Posterior vena cava (tissue), 2 donors: ENCODE measurements at regions of chr17 and their contacts with region 1.

Region 1: DNA sequence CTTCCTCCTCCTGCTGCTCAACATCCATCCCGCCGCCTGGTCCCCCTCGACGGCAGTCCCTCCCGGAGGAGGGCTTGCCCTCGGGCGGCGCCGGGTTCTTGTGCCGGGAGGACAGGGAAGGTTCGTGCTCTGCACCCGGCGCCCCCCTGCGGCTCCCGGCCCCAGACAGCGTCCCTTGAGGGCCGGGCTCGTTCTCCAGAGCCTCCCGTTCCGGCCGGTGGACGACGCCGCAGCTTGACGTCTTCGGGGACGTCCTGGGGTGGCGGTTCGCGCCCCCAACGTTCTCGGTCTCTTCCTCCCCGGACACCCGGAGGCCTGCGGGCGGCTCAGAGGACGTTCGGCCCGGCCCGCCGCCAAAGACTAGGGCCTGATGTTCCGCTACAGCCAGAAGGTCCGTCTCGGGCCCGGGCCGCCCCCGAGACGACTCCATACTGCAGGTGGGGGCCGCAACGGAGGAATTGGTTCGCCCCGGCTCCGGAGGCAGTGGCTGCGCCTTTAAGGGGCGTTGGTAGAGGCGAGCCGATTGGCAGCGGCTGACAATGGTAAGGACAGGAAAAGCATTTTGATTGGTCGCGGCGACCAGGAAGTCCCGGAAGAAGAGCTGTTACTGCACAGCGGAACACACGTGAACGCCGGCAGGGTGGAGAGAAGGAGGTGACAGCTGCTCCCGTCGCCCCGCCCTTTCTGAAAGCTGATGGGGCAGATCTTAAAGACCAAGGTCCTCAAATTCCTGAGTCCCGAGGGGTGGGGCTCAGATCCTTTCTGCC is at the start of gene BORCS6:
- DNase-seq: peak; percentile 99
- total RNA-seq, gene BORCS6: 4.5 to 5.6 TPM

Region 2: GRCh38 chr17:8288336-8289102 is 98.6 kb after region 1 on chr17 and contains the start of gene RANGRF:
- intact Hi-C with region 1: loop called in 1 of 2 experiments (anchors 5 kb)
- DNase-seq: peak; percentile 96
- total RNA-seq, gene RANGRF: 16.9 to 19.1 TPM